ENCODE measurements at regions of chr18 and their contacts with region 1.

Region 1: DNA sequence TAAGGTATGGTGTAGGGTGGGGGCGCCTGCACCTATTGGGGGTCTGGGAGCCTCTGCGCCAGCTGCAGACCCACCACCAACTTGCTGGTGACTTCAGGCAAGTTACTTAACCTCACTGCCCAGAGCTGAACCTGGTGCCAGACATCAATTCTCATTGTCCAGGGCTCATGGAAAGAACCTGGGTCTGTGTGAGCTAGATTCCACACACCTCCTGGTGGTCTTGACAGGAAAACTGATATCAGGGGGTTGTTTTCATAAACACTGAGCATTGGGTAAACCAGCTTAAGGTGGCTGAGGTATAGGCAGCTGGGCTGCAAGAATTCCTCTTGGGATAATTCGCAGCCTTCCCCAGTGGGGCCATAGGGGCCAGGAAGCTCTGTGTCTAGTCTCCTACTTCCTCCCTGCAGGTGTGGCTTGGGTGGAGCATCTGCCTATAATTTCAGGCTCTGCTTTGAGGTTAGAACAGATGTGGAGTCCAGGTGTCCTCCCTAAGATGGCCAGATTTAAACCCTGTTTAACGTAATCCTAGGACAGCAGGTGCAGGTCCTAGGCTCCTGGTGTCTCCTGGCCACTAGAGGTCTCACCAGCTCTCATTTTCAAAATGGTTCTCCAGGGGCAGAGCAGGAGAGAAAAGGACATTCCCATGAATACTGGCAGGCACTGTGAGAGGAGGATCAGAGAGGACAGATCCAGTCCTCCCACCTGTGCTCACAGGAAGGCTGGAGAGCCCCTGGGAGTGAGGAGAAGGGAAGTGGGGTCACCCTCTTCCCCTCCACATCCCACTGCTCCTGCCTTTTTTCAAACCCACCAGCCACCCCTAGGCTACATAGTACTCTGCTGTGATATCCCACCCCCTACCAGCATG is 100.4 kb upstream of the SMAD2 start:
- DNase-seq: peak; percentile 66
- H3K4me3 Mint-ChIP-seq: no peak overlapping the region
- H3K27ac Mint-ChIP-seq: no peak overlapping the region
- H3K4me1 Mint-ChIP-seq: no peaks in the 10 kb centered on the region
- H3K27me3 Mint-ChIP-seq: peaks cover 24% of the 10 kb centered on the region
- CTCF ChIP-seq: peak; percentile 65

Region 2: GRCh38 chr18:48345596-48345995 is 314.7 kb after region 1 on chr18:
- CTCF ChIA-PET with region 1: no interaction called
- intact Hi-C with region 1: loop called (anchors 2 kb)
- DNase-seq: peak; percentile 48
- H3K4me3 Mint-ChIP-seq: no peak overlapping the region
- H3K27ac Mint-ChIP-seq: no peak overlapping the region
- H3K4me1 Mint-ChIP-seq: no peaks in the 10 kb centered on the region
- H3K27me3 Mint-ChIP-seq: peaks cover 62% of the 10 kb centered on the region
- CTCF ChIP-seq: no peak

Region 3: DNA sequence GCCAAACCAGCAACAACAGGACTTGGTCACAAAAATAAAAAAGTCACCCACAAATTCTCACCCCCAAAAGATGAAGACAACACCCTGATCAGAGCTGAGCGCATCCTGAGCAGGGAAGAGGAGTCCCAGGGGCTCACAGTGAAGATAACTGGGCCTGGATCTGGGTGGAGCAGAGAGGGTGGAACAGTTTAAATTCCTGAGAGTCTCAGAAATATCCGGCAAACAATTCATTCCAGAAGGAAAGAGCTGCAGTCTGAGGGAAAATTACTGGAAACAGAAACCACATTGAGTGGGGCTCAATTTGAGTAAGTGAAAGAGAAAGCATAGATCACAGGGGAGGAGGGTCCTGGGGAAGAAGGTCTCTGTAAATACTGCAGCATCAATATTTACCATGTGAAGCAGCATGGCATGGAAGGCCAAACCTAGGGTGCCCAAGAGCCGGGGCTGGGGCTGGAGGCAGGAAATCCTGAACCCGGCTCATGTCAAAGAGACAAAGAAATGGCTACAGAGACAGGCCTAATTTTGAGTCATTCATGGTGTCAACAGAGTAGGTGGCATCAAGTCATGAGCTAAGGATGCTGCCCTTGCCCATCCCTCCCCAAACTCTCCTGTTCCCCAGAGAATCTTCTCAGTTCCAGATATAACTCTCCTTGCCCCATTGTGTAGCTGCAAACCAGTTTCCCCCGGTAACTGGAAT is 439.8 kb after region 1 on chr18:
- CTCF ChIA-PET with region 1: no interaction called
- intact Hi-C with region 1: loop called (anchors 5 kb)
- DNase-seq: no peak
- H3K4me3 Mint-ChIP-seq: no peak overlapping the region
- H3K27ac Mint-ChIP-seq: no peak overlapping the region
- H3K4me1 Mint-ChIP-seq: no peaks in the 10 kb centered on the region
- H3K27me3 Mint-ChIP-seq: peaks cover 83% of the 10 kb centered on the region
- CTCF ChIP-seq: no peak

Measured in Calu3 (cell line).